Caco-2 (cell line): ENCODE measurements at regions of chr6 and their contacts with region 1.

Region 1: GRCh38 chr6:38612143-38612965 is 27.4 kb downstream of the BTBD9 start:
- DNase-seq: peak; percentile 54 to 68
- H3K4me3 ChIP-seq: no peak overlapping the region
- H3K4me3 Mint-ChIP-seq: peak overlapping the region; percentile 18
- H3K27ac Mint-ChIP-seq: peak overlapping the region; percentile 79
- H3K4me1 ChIP-seq: peaks cover 59% of the 10 kb centered on the region
- H3K4me1 Mint-ChIP-seq: peaks cover 41% of the 10 kb centered on the region
- H3K27me3 ChIP-seq: no peaks in the 10 kb centered on the region
- H3K27me3 Mint-ChIP-seq: no peaks in the 10 kb centered on the region
- CTCF ChIP-seq: no peak

Region 2: DNA sequence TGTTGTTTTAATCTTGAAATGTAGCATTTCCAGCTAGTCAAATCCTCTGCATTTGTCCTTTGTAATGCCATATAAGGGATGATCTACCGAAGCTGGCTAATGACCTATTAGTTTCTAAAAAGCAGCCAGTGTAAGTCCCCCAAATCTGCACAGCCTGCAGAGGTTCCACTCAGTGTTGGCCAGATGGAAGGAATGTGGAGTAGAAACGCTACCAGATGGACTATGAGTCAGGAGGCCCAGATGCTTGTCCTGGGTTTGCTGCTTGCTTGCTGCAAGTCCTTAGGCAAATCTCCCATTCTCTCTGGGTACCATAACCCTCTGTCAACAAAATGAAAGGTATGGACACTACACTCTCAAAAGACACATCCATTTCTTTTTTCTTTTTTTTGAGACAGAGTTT is 122.4 kb before region 1 on chr6:
- CTCF ChIA-PET with region 1: no interaction called
- POLR2A ChIA-PET with region 1: no interaction called
- intact Hi-C with region 1: no loop called
- DNase-seq: no peak
- H3K4me3 ChIP-seq: no peak overlapping the region
- H3K4me3 Mint-ChIP-seq: no peak overlapping the region
- H3K27ac Mint-ChIP-seq: no peak overlapping the region
- H3K4me1 ChIP-seq: peaks cover 4% of the 10 kb centered on the region; the same call in 1 of the 2 replicates
- H3K4me1 Mint-ChIP-seq: no peaks in the 10 kb centered on the region
- H3K27me3 ChIP-seq: no peaks in the 10 kb centered on the region
- H3K27me3 Mint-ChIP-seq: no peaks in the 10 kb centered on the region
- CTCF ChIP-seq: no peak

Region 3: DNA sequence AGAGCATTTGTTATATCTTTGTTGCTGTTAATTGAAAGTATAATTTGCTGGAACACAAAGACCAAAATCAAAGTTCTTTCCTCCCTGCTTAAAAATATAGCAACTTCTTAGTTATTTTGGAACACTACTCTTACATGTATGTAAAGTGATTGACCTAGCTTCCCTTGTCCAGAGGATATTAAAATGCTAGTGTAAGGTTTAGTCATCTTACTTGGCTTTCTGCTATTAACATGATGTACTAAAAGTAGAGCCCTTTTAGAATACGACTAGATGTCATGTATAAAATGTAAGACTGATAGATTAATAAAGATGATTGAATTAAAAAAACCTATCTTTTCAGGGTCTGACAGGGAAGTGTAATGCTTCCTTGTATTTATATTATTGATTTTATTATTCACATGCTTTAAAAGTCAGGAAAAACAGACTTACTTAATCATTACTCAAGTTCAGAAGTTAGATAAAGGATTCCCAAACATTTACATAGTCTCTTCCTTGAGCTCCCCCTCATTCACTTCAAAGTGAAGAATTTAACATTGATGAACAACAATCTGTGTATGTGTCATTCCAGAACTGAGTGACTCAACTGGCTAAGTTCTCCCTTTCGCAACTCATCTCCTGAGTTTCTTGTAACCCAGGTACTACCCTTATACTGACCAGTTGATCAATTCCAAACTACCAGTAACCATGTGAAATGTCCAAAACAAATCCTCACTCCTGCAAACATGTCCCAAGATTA is 23.6 kb before region 1 on chr6:
- CTCF ChIA-PET with region 1: no interaction called
- POLR2A ChIA-PET with region 1: no interaction called
- intact Hi-C with region 1: loop called (anchors 1 kb)
- DNase-seq: peak in 1 of 2 experiments; percentile 41
- H3K4me3 ChIP-seq: no peak overlapping the region
- H3K4me3 Mint-ChIP-seq: no peak overlapping the region
- H3K27ac Mint-ChIP-seq: no peak overlapping the region
- H3K4me1 ChIP-seq: peaks cover 18% of the 10 kb centered on the region
- H3K4me1 Mint-ChIP-seq: no peaks in the 10 kb centered on the region
- H3K27me3 ChIP-seq: no peaks in the 10 kb centered on the region
- H3K27me3 Mint-ChIP-seq: no peaks in the 10 kb centered on the region
- CTCF ChIP-seq: no peak

Region 4: DNA sequence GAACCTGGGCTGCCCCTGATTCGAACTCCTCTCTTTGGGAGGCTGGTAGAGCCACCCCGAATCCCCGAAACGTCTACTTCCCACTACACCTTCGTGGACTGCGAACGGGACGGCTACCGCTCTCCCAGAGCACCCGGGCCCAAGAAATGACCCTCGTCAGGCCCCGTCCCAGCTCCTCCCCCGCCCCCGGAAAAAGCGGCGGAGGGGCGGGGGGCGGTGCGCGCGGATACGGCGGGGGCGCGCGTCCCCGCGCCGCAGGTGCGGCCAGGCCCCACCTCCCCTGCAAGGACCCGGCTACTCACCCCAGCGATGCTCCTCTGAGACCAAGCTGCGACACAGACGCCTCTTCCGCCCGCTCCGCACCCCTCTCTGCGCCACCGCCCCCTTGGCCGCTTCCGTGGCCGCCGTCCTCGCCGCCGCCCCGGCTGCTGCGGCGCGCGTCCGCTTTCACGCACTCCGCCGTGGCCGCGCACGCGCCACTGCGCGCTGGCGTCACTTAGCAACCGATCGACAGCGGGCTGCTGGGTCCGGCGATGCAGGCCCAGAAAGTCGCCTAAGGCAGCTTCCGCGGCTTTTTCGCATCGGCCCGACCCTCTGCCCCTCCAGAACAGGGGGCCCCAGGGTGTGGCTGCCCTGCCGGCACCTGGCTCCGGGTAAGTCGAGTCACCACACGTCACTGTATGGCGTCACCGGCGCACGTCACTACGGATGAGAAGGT is 27.3 kb after region 1 on chr6 and contains the start of gene BTBD9:
- CTCF ChIA-PET with region 1: interaction called, 5 read pairs
- POLR2A ChIA-PET with region 1: no interaction called
- intact Hi-C with region 1: loop called (anchors 2 kb)
- DNase-seq: peak; percentile 71 to 83
- H3K4me3 ChIP-seq: peak within 1 kb of the TSS; percentile 88
- H3K4me3 Mint-ChIP-seq: peak within 1 kb of the TSS; percentile 83
- H3K27ac Mint-ChIP-seq: peak within 1 kb of the TSS; percentile 85
- H3K4me1 ChIP-seq: peaks cover 21% of the 10 kb centered on the region
- H3K4me1 Mint-ChIP-seq: peaks cover 37% of the 10 kb centered on the region
- H3K27me3 ChIP-seq: no peaks in the 10 kb centered on the region
- H3K27me3 Mint-ChIP-seq: no peaks in the 10 kb centered on the region
- CTCF ChIP-seq: no peak
- total RNA-seq, gene BTBD9: 19.0 and 19.6 TPM in 2 replicates